ENCODE measurements at regions of chr4 and their contacts with region 1.

Region 1: DNA sequence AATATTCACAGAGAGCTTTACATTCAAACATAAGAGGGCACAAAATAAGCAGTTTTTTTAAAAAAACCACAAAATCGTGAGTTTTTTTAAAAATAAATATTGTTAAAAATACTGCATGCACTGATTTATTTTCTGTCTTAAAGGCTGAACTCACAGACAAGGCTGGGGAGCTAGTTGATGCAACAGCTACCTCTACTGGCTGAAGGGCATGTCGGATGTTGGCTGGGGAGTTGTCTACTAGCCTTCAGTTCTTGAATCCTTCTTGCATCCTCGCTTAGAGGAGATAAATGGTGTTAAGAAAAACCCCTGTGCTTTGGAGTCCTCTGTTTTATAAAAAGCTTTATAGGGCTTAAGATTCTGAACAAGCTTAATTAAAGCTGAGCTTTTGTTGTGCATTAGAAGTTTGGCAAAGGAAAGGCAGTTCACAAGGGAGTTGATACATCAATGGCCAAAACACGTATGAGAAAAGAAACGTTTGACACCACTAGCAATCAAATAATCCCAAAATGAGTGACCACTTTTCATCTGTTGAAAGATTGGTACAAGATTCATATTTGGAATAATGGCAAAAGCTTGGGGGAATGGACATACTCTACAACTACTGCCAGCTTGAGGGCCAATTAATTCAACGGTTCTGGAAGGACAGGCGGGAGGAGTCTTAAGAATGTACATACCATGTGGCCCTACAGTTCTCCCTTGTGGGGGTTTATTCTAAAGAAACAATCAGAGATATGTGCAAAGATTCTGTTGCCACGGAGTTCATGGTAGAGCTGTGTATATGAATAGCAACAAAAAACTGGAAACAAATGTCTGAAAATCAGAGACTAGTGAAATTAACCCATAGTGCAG is 94.7 kb downstream of the SEL1L3 start:
- DNase-seq: peak; percentile 27
- H3K4me3 Mint-ChIP-seq: no peak overlapping the region
- H3K27ac Mint-ChIP-seq: no peak overlapping the region
- H3K4me1 Mint-ChIP-seq: no peaks in the 10 kb centered on the region
- H3K27me3 Mint-ChIP-seq: no peaks in the 10 kb centered on the region

Region 2: GRCh38 chr4:25439918-25440477 is 328.1 kb before region 1 on chr4:
- CTCF ChIA-PET with region 1: interaction called, 14 read pairs
- POLR2A ChIA-PET with region 1: no interaction called
- intact Hi-C with region 1: loop called (anchors 2 kb)
- DNase-seq: peak; percentile 58
- H3K4me3 Mint-ChIP-seq: no peak overlapping the region
- H3K27ac Mint-ChIP-seq: no peak overlapping the region
- H3K4me1 Mint-ChIP-seq: no peaks in the 10 kb centered on the region
- H3K27me3 Mint-ChIP-seq: no peaks in the 10 kb centered on the region

Region 3: GRCh38 chr4:26034849-26035248 is 266.7 kb after region 1 on chr4:
- CTCF ChIA-PET with region 1: no interaction called
- POLR2A ChIA-PET with region 1: no interaction called
- intact Hi-C with region 1: no loop called
- DNase-seq: peak; percentile 67
- H3K4me3 Mint-ChIP-seq: no peak overlapping the region
- H3K27ac Mint-ChIP-seq: no peak overlapping the region
- H3K4me1 Mint-ChIP-seq: peaks cover 30% of the 10 kb centered on the region
- H3K27me3 Mint-ChIP-seq: peaks cover 2% of the 10 kb centered on the region

Measured in activated CD4-positive, alpha-beta memory T cell treated with anti-CD3 and anti-CD28 coated beads for 36 hours (primary cell).